ENCODE measurements at regions of chr17 and their contacts with region 1.

Region 1: DNA sequence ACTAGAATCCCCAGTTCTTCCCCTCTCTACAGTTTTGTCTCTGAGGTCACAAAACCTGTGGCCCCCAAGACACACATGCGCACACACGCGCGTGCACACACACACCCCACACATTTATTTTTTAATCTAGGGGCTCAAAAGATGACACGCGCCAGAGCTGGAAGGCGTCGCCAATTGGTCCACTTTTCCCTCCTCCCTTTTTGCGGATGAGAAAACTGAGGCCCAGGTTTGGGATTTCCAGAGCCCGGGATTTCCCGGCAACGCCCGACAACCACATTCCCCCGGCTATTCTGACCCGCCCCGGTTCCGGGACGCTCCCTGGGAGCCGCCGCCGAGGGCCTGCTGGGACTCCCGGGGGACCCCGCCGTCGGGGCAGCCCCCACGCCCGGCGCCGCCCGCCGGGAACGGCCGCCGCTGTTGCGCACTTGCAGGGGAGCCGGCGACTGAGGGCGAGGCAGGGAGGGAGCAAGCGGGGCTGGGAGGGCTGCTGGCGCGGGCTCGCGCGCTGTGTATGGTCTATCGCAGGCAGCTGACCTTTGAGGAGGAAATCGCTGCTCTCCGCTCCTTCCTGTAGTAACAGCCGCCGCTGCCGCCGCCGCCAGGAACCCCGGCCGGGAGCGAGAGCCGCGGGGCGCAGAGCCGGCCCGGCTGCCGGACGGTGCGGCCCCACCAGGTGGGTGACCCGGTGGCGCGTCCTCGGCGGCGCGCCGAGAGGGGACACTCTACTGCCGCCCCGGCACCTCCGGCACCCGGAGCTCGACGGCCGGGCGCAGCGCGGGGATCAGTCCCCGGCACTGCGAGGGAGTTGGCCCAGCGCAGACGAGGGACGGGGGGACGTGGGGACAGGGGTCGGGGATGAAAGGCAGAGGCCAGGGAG is at the start of gene STAT5A:
- DNase-seq: no peak
- ATAC-seq: peak; percentile 85
- H3K4me3 ChIP-seq: peak within 1 kb of the TSS; percentile 91
- H3K27ac ChIP-seq: peak within 1 kb of the TSS; percentile 79
- H3K4me1 ChIP-seq: peaks cover 23% of the 10 kb centered on the region
- H3K27me3 ChIP-seq: no peaks in the 10 kb centered on the region
- CTCF ChIP-seq: no peak
- EP300 ChIP-seq: no peak
- POLR2A ChIP-seq: peak; percentile 80
- RAD21 ChIP-seq: no peak
- polyA plus RNA-seq, gene STAT5A: 14.8 to 24.0 TPM

Region 2: GRCh38 chr17:42248351-42249179 is 39.6 kb before region 1 on chr17:
- CTCF ChIA-PET with region 1: interaction called, 4 read pairs
- POLR2A ChIA-PET with region 1: interaction called, 6 read pairs
- RAD21 ChIA-PET with region 1: interaction called, 12 read pairs
- SMC1A ChIA-PET with region 1: interaction called, 15 read pairs
- in situ Hi-C with region 1: no loop called
- intact Hi-C with region 1: no loop called
- DNase-seq: peak; percentile 68
- ATAC-seq: peak; percentile 99
- H3K4me3 ChIP-seq: peak overlapping the region; percentile 70
- H3K27ac ChIP-seq: peak overlapping the region; percentile 88
- H3K4me1 ChIP-seq: peaks cover 27% of the 10 kb centered on the region
- H3K27me3 ChIP-seq: no peaks in the 10 kb centered on the region
- CTCF ChIP-seq: no peak
- EP300 ChIP-seq: no peak
- POLR2A ChIP-seq: peak; percentile 81
- RAD21 ChIP-seq: no peak

Region 3: GRCh38 chr17:42276359-42276608 is 11.9 kb before region 1 on chr17 and contains the start of gene STAT5B:
- CTCF ChIA-PET with region 1: interaction called, 14 read pairs
- POLR2A ChIA-PET with region 1: interaction called, 9 read pairs
- RAD21 ChIA-PET with region 1: interaction called, 4 read pairs
- SMC1A ChIA-PET with region 1: interaction called, 6 read pairs
- in situ Hi-C with region 1: no loop called
- intact Hi-C with region 1: no loop called
- DNase-seq: no peak
- ATAC-seq: peak; percentile 56
- H3K4me3 ChIP-seq: peak within 1 kb of the TSS; percentile 81
- H3K27ac ChIP-seq: peak within 1 kb of the TSS; percentile 77
- H3K4me1 ChIP-seq: peaks cover 23% of the 10 kb centered on the region
- H3K27me3 ChIP-seq: no peaks in the 10 kb centered on the region
- CTCF ChIP-seq: no peak
- EP300 ChIP-seq: no peak
- POLR2A ChIP-seq: peak; percentile 82
- RAD21 ChIP-seq: no peak
- polyA plus RNA-seq, gene STAT5B: 11.0 to 11.8 TPM

Region 4: DNA sequence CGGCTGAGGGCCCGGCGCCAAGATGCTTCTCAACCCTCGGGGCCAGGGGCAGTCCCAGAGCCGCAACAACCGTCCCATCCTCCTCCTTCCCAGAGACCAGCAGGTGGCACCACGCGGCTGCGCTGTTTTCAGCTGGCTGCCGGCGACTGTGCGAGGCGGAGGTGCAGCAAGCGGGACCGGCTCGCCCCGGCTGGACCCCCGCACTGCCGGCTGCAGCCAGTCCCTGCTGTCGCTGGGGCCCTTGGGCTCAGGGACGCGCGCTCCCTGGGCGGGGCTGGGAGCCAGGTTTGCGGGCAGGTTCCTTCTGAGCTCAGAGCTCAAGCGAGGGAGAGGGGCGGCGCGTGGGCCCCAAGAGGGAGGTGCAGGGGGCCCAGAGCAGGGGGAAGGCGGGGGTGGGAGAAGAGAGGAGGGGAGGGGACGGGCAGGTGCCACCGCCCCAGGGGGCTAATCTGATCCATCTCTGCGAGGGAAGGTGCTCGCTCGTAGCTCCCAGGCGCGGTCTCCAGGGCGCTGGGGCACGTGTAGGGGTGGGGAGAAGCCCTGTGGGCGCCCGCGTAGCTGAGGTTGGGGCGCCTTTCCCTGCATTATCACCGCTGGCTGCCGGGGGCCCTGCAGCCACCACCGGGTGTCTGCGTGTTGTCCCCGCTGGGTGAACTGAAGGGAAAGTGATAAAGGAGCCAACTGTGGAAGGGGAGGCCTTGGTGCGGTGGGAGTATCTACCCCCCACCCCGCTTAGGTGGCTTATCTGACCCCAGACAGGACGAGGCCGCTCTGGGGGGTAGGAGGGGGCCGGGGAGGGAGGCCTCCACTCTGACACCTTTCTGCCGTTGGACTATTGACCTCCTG is 24.3 kb after region 1 on chr17:
- CTCF ChIA-PET with region 1: interaction called, 11 read pairs
- POLR2A ChIA-PET with region 1: interaction called, 5 read pairs
- RAD21 ChIA-PET with region 1: interaction called, 4 read pairs
- SMC1A ChIA-PET with region 1: interaction called, 4 read pairs
- in situ Hi-C with region 1: no loop called
- intact Hi-C with region 1: no loop called
- DNase-seq: no peak
- ATAC-seq: peak; percentile 91
- H3K4me3 ChIP-seq: no peak overlapping the region
- H3K27ac ChIP-seq: peak overlapping the region; percentile 53
- H3K4me1 ChIP-seq: peaks cover 43% of the 10 kb centered on the region
- H3K27me3 ChIP-seq: no peaks in the 10 kb centered on the region
- CTCF ChIP-seq: peak; percentile 60 to 87 (median 71)
- EP300 ChIP-seq: no peak
- POLR2A ChIP-seq: peak; percentile 82
- RAD21 ChIP-seq: peak; percentile 67

Measured in GM12878 (cell line).